OCI-LY7 (cell line): ENCODE measurements at regions of chr9 and their contacts with region 1.

Region 1: DNA sequence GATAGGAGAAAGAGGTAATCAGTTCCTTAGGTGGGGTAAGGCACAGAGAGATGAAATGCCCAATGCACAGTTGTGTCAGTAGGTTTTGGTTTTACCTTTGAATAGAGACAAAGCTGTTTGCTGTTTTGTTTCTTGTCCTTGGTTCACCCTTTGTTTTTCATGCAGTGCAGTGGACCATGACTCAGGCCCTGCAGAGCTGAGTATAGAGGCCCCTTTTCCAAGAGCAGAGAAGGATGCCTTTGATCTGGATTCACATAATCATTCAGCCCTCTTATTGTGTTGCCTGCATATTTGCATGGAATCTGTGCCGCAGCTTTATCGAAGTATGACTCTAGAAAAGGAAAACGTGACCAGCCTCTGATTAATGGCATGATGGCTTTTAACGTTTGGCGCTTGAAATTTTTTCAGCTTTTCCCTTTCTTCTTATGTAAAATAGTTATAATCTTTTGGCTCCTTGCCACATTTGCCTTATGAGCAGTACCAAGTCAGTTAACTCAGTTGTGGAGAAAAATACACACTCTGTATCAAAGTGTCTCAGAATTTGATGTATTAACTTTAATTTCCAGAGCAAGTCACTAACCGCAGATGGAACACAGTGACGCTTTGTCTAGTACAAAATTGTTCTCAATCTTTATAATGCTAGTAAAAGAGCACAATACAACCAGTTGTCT is 197.6 kb downstream of the KDM4C start:
- DNase-seq: peak; percentile 19
- H3K4me3 ChIP-seq: no peak overlapping the region
- H3K27ac ChIP-seq: no peak overlapping the region
- H3K4me1 ChIP-seq: peaks cover 16% of the 10 kb centered on the region
- CTCF ChIP-seq: no peak

Region 2: DNA sequence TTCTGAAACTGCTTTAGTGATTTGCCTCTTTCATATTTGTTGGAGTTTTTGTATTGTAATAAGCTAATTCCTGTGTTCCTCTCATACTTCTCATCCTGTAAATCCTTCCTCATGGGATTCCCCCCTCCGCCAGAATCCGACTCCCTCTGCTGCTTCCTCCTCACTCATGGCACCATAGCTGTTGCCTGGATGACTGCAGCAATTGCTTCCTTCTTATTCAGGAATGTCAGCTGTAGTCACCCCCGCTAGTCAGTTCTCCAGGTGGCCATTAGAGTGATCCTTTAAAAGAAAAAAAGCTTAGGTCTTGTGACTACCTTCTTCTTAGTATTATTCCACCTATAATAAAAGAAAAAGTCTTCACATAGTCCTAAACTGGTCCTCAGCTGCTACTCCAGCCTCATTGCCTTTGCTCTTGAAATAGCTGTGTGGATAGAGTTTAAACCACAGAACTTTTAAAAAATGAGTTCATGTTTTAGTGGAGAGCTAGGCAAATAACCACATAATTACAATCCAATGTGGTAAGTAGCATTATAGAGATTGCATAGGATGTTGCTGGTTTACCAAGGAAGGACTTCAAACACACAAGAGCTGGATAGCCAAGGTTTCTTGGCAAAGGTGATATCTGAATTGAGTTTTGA is 29.7 kb after region 1 on chr9:
- CTCF ChIA-PET with region 1: no interaction called
- POLR2A ChIA-PET with region 1: interaction called, 10 read pairs
- intact Hi-C with region 1: no loop called
- DNase-seq: no peak
- H3K4me3 ChIP-seq: no peak overlapping the region
- H3K27ac ChIP-seq: no peak overlapping the region
- H3K4me1 ChIP-seq: no peaks in the 10 kb centered on the region
- CTCF ChIP-seq: no peak